ENCODE measurements at regions of chr3 and their contacts with region 1.

Region 1: DNA sequence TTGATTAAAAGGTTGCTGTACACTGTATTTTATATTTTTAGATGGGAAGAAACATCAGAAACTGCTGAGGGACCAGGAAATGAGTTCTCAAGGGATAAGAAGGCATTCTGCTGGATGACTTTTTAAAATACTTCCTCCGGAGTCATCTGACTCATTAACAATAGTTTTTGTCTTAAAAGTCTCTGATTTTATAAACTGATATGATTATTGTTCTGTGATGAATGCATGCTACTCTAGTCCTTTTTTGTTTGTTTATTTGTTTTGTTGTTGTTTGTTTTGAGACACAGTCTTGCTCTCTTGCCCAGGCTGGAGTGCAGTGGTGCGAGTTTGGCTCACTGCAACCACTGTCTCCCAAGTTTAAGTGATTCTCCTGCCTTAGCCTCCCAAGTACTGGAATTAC is 18.2 kb upstream of the HLTF start:
- DNase-seq: no peak
- H3K4me3 Mint-ChIP-seq: no peak overlapping the region
- H3K27ac Mint-ChIP-seq: no peak overlapping the region
- H3K4me1 Mint-ChIP-seq: no peaks in the 10 kb centered on the region
- H3K27me3 Mint-ChIP-seq: no peaks in the 10 kb centered on the region
- CTCF ChIP-seq: no peak

Region 2: GRCh38 chr3:148974726-148975125 is 129.8 kb before region 1 on chr3:
- CTCF ChIA-PET with region 1: interaction called, 11 read pairs
- intact Hi-C with region 1: no loop called
- DNase-seq: no peak
- H3K4me3 Mint-ChIP-seq: peak overlapping the region; percentile 2
- H3K27ac Mint-ChIP-seq: no peak overlapping the region
- H3K4me1 Mint-ChIP-seq: no peaks in the 10 kb centered on the region
- H3K27me3 Mint-ChIP-seq: no peaks in the 10 kb centered on the region
- CTCF ChIP-seq: no peak

Measured in Calu3 (cell line).